WTC11 (cell line): ENCODE measurements at regions of chr1 and their contacts with region 1.

Region 1: DNA sequence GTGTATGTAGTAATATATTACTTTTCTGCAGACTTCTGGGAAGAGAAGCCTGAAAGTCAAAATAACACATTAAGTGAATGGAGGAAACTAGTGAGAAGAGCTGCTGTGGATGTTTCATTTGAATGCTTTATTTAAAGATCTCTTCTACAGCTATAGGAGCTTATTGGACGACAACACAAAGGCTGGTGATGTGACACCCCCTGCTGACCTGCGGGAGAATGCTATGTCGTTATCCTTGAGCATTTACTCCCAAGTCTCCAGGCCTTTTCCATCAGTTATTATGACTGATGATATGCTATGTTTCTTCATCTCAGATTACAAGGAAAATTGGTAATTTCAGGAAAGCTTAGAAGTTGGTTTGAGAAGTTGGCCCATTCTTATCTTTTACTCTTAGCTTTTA is 22.3 kb upstream of the PLA2G4A start:
- DNase-seq: peak; percentile 33
- ATAC-seq: peak; percentile 72
- H3K4me3 Mint-ChIP-seq: no peak overlapping the region
- H3K27ac Mint-ChIP-seq: no peak overlapping the region
- H3K4me1 Mint-ChIP-seq: peaks cover 11% of the 10 kb centered on the region
- H3K27me3 Mint-ChIP-seq: no peaks in the 10 kb centered on the region
- CTCF ChIP-seq: no peak

Region 2: GRCh38 chr1:186605762-186606350 is 200.6 kb before region 1 on chr1:
- CTCF ChIA-PET with region 1: interaction called, 12 read pairs
- POLR2A ChIA-PET with region 1: no interaction called
- DNase-seq: peak; percentile 69
- ATAC-seq: peak; percentile 98
- H3K4me3 Mint-ChIP-seq: no peak overlapping the region
- H3K27ac Mint-ChIP-seq: no peak overlapping the region
- H3K4me1 Mint-ChIP-seq: peaks cover 6% of the 10 kb centered on the region
- H3K27me3 Mint-ChIP-seq: no peaks in the 10 kb centered on the region
- CTCF ChIP-seq: peak; percentile 59

Region 3: DNA sequence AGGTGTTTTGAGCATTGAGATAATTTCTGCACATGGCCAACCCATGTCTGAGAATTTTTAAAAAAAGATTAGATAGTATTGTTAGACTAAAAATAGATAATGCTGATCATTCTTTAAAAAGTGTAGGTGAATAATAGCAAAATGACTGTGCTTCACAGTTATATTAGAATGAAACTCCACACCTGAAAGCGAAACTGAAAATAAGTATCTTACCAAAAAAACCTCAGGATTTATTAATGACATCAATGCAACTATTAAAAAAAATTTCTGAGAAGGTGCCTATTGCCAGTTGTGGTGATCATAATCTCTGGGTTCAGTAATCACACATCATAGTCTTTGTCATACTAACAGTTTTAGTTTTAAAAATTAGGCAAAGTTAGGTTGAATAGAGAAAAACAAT is 58.8 kb after region 1 on chr1:
- CTCF ChIA-PET with region 1: no interaction called
- POLR2A ChIA-PET with region 1: no interaction called
- DNase-seq: no peak
- ATAC-seq: no peak
- H3K4me3 Mint-ChIP-seq: no peak overlapping the region
- H3K27ac Mint-ChIP-seq: no peak overlapping the region
- H3K4me1 Mint-ChIP-seq: peaks cover 5% of the 10 kb centered on the region
- H3K27me3 Mint-ChIP-seq: no peaks in the 10 kb centered on the region
- CTCF ChIP-seq: no peak